HEK293 (cell line): ENCODE measurements at regions of chr4 and their contacts with region 1.

Region 1: DNA sequence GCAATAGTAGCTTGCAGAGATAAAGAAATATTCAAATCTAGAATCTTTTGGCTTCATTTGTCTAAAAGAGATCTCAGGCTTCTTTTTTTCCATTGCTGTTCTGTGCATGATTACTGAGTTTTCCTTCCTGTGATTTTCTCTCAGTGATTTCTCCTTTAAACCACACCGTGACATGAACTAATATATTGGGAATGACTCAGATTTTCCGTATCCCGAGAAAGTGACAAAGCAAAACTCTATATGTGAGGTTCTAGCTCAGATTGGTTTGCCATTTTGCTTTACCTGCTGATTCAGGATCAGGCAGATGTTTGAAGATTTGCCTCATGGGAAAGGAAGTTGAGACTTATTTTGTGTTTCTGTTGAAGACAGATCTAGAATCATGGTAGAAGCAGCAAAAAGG is 59.4 kb downstream of the MTHFD2L start:
- H3K4me3 ChIP-seq: no peak overlapping the region
- H3K27ac ChIP-seq: no peak overlapping the region
- H3K4me1 ChIP-seq: no peaks in the 10 kb centered on the region
- CTCF ChIP-seq: no peak

Region 2: GRCh38 chr4:74228691-74229640 is 11.6 kb after region 1 on chr4:
- CTCF ChIA-PET with region 1: interaction called, 19 read pairs
- POLR2A ChIA-PET with region 1: no interaction called
- H3K4me3 ChIP-seq: no peak overlapping the region
- H3K27ac ChIP-seq: no peak overlapping the region
- H3K4me1 ChIP-seq: no peaks in the 10 kb centered on the region
- CTCF ChIP-seq: no peak

Region 3: DNA sequence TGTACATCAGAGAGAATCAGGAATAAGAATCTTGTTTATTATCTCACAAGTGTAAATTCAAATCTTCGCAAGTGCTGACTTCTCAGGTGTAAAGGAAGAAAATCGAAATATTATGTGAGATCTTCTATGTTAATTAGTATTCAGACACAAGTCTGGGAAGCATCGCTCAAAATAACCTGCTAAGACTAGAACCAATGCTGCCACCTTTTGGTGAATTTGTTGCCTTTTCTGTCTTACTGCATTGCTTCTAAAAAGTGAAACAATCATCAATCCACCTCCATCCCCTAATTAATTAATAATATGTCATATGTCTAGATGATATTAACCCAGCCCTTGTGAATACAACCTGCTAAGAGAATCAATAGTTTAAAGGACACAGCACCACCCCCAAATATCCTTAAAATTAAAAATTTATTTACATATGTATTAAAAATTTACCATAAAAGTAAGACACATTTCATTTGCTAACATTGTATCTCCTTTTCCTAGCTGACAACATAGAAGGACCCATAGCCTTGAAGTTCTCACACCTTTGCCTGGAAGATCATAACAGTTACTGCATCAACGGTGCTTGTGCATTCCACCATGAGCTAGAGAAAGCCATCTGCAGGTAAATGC is 94.4 kb after region 1 on chr4:
- CTCF ChIA-PET with region 1: no interaction called
- POLR2A ChIA-PET with region 1: no interaction called
- H3K4me3 ChIP-seq: no peak overlapping the region
- H3K27ac ChIP-seq: no peak overlapping the region
- H3K4me1 ChIP-seq: no peaks in the 10 kb centered on the region
- CTCF ChIP-seq: 0 out of 2 replicates have a peak, but pooled peaks have one; percentile 19

Region 4: GRCh38 chr4:74483290-74483911 is 266.0 kb after region 1 on chr4:
- CTCF ChIA-PET with region 1: no interaction called
- POLR2A ChIA-PET with region 1: no interaction called
- H3K4me3 ChIP-seq: no peak overlapping the region
- H3K27ac ChIP-seq: no peak overlapping the region
- H3K4me1 ChIP-seq: no peaks in the 10 kb centered on the region
- CTCF ChIP-seq: no peak